MCF 10A (cell line): ENCODE measurements at regions of chr1 and their contacts with region 1.

Region 1: DNA sequence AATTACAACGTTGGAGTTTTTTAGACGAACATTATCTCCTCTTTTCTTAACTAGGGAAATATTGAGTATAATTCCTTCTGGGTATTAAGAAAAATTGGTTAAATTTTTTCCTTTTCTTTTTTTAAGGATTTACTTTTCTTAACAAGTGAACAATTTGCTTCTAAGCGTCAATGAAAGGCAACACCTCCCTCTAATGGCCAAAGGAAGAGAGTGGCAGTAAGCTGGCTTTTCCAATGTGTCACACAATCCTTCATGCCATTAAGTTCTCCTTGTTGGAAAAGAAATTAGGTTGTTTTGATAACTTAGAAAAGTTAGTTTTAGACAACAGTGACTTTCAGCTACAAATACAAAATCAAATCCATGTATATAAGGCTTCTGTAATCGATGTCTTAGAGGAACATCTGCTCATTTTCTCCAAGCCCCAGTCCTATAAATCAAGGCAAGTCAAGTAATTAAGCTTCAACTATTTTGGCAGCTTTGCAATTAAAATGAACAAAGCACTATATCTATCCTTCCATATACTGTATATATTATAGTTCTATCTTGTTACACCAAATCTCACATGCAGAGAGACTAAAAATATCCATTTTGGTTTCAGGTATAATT is 62.8 kb downstream of the EDEM3 start:
- DNase-seq: peak; percentile 72
- H3K4me3 Mint-ChIP-seq: no peak overlapping the region
- H3K27ac Mint-ChIP-seq: no peak overlapping the region
- H3K4me1 Mint-ChIP-seq: no peaks in the 10 kb centered on the region
- H3K27me3 Mint-ChIP-seq: no peaks in the 10 kb centered on the region
- CTCF ChIP-seq: peak; percentile 80

Region 2: GRCh38 chr1:183783767-183784637 is 907.8 kb before region 1 on chr1:
- CTCF ChIA-PET with region 1: no interaction called
- POLR2A ChIA-PET with region 1: no interaction called
- intact Hi-C with region 1: no loop called
- DNase-seq: peak; percentile 79
- H3K4me3 Mint-ChIP-seq: no peak overlapping the region
- H3K27ac Mint-ChIP-seq: peak overlapping the region; percentile 4
- H3K4me1 Mint-ChIP-seq: peaks cover 19% of the 10 kb centered on the region
- H3K27me3 Mint-ChIP-seq: no peaks in the 10 kb centered on the region
- CTCF ChIP-seq: no peak

Region 3: DNA sequence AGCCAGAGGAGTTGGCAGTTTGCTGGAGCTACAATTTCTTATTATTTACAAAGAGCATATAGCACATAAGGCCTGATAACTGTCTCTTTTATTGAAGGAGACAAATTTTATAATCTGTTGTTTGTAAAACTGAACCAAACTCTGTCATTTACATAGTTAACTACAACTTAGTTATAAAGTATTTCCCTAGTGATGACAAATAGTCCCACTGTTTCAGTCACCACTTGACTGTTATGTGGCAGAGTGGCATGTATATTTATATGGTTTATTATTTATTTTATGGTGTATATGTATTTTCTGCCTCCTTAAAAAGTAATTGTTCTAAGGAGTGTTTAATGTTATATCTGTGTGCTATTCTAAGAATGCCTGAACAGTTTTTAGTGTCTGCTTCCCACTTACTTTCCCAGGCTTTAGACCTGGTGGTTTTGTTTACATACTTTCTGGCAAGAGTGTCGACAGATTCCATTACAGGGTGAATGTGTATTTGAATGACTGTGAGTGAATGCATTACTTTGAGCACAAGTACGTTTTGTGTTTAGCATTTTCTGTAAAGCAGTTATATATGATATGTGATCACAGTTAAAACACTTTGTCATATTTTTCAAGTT is 630.3 kb before region 1 on chr1:
- CTCF ChIA-PET with region 1: interaction called, 12 read pairs
- POLR2A ChIA-PET with region 1: no interaction called
- intact Hi-C with region 1: no loop called
- DNase-seq: peak; percentile 24
- H3K4me3 Mint-ChIP-seq: no peak overlapping the region
- H3K27ac Mint-ChIP-seq: no peak overlapping the region
- H3K4me1 Mint-ChIP-seq: peaks cover 12% of the 10 kb centered on the region
- H3K27me3 Mint-ChIP-seq: no peaks in the 10 kb centered on the region
- CTCF ChIP-seq: no peak

Region 4: DNA sequence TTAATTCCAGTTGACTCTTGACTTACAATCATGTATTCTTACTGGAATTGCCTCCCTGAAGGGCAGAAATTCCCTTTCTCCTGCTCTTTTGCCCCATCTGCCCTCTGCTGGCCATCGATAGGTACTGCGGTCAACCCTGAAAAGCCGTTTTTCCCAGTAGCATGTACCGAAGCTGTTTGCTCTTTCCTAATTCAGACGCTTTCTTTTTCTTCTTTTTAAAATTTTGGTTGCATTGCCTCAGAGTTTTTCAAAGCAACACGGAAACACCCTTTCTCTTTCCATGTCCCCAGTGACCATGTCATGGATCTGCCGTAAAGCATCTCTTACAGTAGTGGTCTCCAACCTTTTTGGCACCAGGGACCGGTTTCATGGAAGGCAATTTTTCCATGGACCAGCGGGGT is 469.2 kb before region 1 on chr1:
- CTCF ChIA-PET with region 1: interaction called, 18 read pairs
- POLR2A ChIA-PET with region 1: no interaction called
- intact Hi-C with region 1: no loop called
- DNase-seq: peak; percentile 77
- H3K4me3 Mint-ChIP-seq: peak overlapping the region; percentile 12
- H3K27ac Mint-ChIP-seq: no peak overlapping the region
- H3K4me1 Mint-ChIP-seq: peaks cover 5% of the 10 kb centered on the region
- H3K27me3 Mint-ChIP-seq: peaks cover 15% of the 10 kb centered on the region
- CTCF ChIP-seq: peak; percentile 93

Region 5: DNA sequence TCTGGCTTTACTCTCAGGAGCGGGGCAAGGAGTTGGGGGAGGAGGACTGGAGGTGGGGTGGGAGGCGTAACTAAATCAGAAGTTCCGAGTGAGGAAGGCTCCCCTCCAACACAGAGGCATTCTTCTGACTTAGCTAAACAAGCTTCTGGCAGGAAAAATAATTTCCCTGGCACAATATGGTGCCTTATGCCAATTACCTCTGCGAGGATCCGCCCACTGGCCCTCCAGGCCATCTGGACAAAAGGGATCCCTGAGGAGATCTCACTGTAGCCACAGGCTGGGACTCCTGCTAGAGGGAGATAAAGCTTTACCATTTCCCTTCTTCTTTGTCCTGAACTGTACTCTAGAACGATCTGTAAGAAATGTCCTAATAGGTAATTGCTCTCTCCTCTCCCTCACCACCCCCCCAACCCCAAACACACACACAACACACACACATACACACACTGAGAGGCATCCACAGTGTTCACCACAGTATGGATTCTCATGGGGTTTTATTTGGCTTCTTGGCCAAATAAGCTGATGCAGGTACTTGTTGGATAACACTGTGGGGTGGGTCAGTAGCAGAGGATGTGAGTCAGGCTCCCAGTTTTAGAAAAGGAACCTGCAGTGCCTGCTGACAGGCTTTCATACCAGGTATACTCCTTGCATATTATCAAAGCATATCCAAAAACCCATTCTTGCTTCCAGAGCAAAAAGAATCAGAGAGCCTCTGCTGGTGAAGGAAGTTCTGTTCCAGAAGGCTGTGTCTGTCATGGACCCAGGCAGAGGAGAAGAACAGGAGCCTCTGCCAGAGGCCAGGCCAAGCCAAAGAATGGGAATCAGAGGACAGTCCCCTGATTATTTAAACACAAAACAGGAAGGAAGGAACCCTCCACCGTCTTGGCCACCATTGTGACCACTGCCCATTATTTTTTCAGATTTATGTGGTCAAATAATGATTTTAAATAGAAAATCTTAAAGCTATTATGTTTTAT is 135.9 kb before region 1 on chr1:
- CTCF ChIA-PET with region 1: no interaction called
- POLR2A ChIA-PET with region 1: no interaction called
- intact Hi-C with region 1: loop called (anchors 5 kb)
- DNase-seq: peak; percentile 52
- H3K4me3 Mint-ChIP-seq: no peak overlapping the region
- H3K27ac Mint-ChIP-seq: peak overlapping the region; percentile 91
- H3K4me1 Mint-ChIP-seq: peaks cover 41% of the 10 kb centered on the region
- H3K27me3 Mint-ChIP-seq: no peaks in the 10 kb centered on the region
- CTCF ChIP-seq: no peak

Region 6: DNA sequence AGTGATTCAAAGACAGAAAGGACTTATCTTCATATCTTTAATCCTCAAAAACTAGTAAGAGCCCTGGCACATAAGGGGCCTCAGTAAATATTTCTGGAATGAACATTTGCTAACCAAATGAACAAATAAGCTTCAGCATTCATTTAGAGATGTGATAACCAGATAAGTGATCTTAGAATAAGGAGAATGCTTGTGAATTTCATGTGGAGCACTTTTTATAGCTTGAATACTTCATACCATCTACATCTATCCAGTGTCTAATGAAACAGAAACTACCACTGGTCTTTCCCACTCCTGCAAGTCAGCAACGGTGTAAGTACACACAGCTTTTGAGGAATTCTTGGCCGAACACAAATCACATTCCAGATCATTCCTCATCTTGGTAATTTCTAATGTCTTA is 24.3 kb after region 1 on chr1:
- CTCF ChIA-PET with region 1: interaction called, 13 read pairs
- POLR2A ChIA-PET with region 1: interaction called, 3 read pairs
- intact Hi-C with region 1: no loop called
- DNase-seq: no peak
- H3K4me3 Mint-ChIP-seq: no peak overlapping the region
- H3K27ac Mint-ChIP-seq: no peak overlapping the region
- H3K4me1 Mint-ChIP-seq: no peaks in the 10 kb centered on the region
- H3K27me3 Mint-ChIP-seq: no peaks in the 10 kb centered on the region
- CTCF ChIP-seq: no peak

Region 7: DNA sequence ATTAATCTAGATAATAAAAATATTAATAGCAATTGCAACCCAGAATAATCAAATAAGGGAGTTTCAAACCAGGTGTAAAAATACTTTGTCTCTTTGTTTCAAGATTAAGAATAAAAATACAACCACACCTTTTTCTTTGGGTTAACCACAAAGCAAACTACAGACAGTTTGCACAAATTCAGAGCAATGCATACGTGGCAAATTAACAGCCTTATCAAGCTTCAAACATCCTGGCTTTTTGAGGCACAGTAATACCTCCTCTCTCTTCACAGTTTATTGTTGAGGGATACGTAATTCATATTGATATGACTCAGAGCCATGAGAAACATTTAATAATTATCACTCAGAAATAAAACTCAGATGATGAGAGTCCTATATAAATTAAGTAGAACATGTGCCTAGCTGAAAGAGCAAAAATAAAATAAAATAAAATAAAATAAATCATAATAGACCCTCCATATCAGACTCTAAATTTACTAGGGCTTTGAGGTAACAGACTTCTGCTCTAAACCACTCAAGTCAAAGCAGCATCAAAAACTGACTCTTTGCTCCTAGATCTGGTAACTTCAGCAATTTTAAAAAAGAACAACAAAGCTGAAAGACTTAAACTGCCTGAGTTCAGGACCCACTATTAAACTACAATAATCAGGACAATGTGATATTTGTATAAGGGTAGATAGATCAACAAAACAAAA is 51.4 kb after region 1 on chr1:
- CTCF ChIA-PET with region 1: no interaction called
- POLR2A ChIA-PET with region 1: no interaction called
- intact Hi-C with region 1: no loop called
- DNase-seq: no peak
- H3K4me3 Mint-ChIP-seq: no peak overlapping the region
- H3K27ac Mint-ChIP-seq: no peak overlapping the region
- H3K4me1 Mint-ChIP-seq: peaks cover 24% of the 10 kb centered on the region
- H3K27me3 Mint-ChIP-seq: no peaks in the 10 kb centered on the region
- CTCF ChIP-seq: no peak

Region 8: GRCh38 chr1:184945029-184945428 is 253.2 kb after region 1 on chr1:
- CTCF ChIA-PET with region 1: no interaction called
- POLR2A ChIA-PET with region 1: no interaction called
- intact Hi-C with region 1: no loop called
- DNase-seq: no peak
- H3K4me3 Mint-ChIP-seq: no peak overlapping the region
- H3K27ac Mint-ChIP-seq: no peak overlapping the region
- H3K4me1 Mint-ChIP-seq: no peaks in the 10 kb centered on the region
- H3K27me3 Mint-ChIP-seq: peaks cover 49% of the 10 kb centered on the region
- CTCF ChIP-seq: no peak